CD8-positive, alpha-beta T cell (primary cell): ENCODE measurements at regions of chrX and their contacts with region 1.

Region 1: GRCh38 chrX:101407748-101408531 is at the starts of genes GLA and HNRNPH2:
- DNase-seq: peak; percentile 74 to 98 (median 85)
- ATAC-seq: peak; percentile 88
- H3K4me3 ChIP-seq: peak within 1 kb of the TSS; percentile 88 to 91
- H3K4me3 Mint-ChIP-seq: peak within 1 kb of the TSS; percentile 93
- H3K27ac ChIP-seq: peak within 1 kb of the TSS; percentile 98 to 99
- H3K27ac Mint-ChIP-seq: peak within 1 kb of the TSS; percentile 99
- H3K4me1 ChIP-seq: peaks cover 24% of the 10 kb centered on the region
- H3K4me1 Mint-ChIP-seq: peaks cover 37% of the 10 kb centered on the region
- H3K27me3 ChIP-seq: no peaks in the 10 kb centered on the region
- H3K27me3 Mint-ChIP-seq: no peaks in the 10 kb centered on the region
- CTCF ChIP-seq: no peak
- total RNA-seq, gene GLA: 31.7 to 32.0 TPM
- total RNA-seq, gene HNRNPH2: 43.2 to 47.3 TPM

Region 2: DNA sequence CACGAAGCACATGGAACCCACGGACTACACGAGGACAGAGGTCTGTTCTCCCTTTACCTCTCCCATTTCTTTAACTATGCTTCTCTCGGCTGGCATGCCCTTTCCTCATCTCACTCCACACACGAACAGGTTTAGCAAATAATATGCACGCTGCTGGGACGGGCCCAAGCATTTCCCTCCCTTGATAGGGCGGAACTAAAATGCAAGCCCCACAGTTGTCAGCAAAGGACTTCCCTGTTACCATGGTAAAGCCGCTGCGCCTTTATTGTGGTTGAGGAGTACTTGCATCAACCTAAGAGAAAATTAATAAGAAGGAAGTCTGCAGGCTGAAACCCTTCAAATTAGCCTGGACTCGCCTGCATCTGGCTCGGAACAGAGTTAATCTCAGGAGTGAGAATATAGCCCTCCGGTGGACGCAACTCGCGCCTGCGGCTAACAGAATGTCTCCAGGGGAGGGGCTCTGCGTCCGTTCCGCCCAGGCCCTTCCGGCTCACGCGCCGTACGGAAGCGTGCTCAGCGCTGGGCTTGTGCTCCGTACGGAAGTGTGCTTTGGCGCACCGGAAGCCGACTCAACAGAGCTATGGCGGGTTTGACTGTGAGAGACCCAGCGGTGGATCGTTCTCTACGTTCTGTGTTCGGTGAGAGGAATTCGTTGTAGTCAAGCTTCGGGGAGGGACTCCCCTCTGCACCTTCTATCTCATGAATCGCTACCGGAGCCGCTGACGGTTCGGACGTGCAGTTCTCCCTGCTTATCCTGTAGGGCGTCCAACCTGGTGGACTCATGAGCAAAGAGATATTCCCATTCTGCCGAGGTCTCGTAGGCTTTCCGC is 587.9 kb before region 1 on chrX and contains the start of gene CSTF2:
- CTCF ChIA-PET with region 1: no interaction called
- POLR2A ChIA-PET with region 1: no interaction called
- intact Hi-C with region 1: loop called in 1 of 2 experiments (anchors 5 kb)
- DNase-seq: peak; percentile 53 to 90 (median 78)
- ATAC-seq: peak; percentile 95
- H3K4me3 ChIP-seq: peak within 1 kb of the TSS; percentile 65 to 83
- H3K4me3 Mint-ChIP-seq: peak within 1 kb of the TSS; percentile 90
- H3K27ac ChIP-seq: peak within 1 kb of the TSS; percentile 87 to 92
- H3K27ac Mint-ChIP-seq: peak within 1 kb of the TSS; percentile 90
- H3K4me1 ChIP-seq: no peaks in the 10 kb centered on the region
- H3K4me1 Mint-ChIP-seq: peaks cover 18% of the 10 kb centered on the region
- H3K27me3 ChIP-seq: no peaks in the 10 kb centered on the region
- H3K27me3 Mint-ChIP-seq: peaks cover 4% of the 10 kb centered on the region
- CTCF ChIP-seq: no peak
- total RNA-seq, gene CSTF2: 10.1 to 10.6 TPM

Region 3: DNA sequence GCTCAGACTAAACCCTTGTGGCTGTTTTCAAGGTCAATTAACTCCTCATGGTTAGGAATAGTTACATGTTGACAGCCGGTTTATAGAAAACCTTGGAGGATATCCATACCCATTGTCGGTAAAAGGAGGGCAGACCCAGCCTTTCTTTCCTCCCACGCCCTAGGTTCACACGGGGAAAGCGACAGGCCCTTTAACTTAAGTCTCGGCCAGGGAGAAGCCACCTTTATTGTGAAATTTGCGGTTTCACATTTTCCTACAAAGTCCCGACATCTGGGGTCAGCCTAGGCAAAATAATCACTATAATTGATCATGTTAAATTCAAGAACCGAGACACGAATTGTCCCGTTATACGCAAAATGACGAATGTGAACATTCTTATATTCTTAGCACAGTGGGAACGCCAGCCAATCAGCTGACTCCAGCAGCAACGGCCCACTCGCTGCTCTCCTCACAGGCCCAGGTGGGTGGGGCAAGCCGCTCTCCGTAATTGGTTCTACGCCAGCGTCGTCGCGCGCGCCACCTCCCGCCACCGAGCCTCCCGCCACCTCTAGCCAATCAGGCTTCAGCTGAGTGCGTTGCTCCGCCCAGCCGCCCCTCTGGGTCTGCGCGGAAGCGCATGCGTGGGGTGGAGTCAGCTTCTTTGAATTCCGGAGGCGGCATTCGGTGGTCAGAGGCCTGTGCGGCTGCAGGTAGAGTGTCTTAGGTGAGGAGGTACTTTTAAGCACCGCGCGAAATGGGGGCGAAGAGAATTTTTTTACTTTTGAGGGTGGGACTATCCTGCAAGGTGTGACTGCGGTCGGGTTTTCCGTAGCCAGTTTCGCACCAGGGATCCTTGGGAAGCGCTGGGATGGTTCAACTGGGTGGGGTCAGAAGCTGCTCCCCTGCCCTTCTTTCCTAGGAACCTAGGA is 310.1 kb before region 1 on chrX and contains the start of gene CENPI:
- CTCF ChIA-PET with region 1: no interaction called
- POLR2A ChIA-PET with region 1: no interaction called
- intact Hi-C with region 1: loop called (anchors 2 to 10 kb)
- DNase-seq: peak; percentile 83 to 95 (median 90)
- ATAC-seq: peak; percentile 99
- H3K4me3 ChIP-seq: peak within 1 kb of the TSS; percentile 50 to 69
- H3K4me3 Mint-ChIP-seq: peak within 1 kb of the TSS; percentile 91
- H3K27ac ChIP-seq: peak within 1 kb of the TSS; percentile 80 to 88
- H3K27ac Mint-ChIP-seq: peak within 1 kb of the TSS; percentile 96
- H3K4me1 ChIP-seq: peaks cover 10% of the 10 kb centered on the region
- H3K4me1 Mint-ChIP-seq: peaks cover 13% of the 10 kb centered on the region
- H3K27me3 ChIP-seq: no peaks in the 10 kb centered on the region
- H3K27me3 Mint-ChIP-seq: no peaks in the 10 kb centered on the region
- CTCF ChIP-seq: no peak
- total RNA-seq, gene CENPI: 0.35 to 0.44 TPM

Region 4: DNA sequence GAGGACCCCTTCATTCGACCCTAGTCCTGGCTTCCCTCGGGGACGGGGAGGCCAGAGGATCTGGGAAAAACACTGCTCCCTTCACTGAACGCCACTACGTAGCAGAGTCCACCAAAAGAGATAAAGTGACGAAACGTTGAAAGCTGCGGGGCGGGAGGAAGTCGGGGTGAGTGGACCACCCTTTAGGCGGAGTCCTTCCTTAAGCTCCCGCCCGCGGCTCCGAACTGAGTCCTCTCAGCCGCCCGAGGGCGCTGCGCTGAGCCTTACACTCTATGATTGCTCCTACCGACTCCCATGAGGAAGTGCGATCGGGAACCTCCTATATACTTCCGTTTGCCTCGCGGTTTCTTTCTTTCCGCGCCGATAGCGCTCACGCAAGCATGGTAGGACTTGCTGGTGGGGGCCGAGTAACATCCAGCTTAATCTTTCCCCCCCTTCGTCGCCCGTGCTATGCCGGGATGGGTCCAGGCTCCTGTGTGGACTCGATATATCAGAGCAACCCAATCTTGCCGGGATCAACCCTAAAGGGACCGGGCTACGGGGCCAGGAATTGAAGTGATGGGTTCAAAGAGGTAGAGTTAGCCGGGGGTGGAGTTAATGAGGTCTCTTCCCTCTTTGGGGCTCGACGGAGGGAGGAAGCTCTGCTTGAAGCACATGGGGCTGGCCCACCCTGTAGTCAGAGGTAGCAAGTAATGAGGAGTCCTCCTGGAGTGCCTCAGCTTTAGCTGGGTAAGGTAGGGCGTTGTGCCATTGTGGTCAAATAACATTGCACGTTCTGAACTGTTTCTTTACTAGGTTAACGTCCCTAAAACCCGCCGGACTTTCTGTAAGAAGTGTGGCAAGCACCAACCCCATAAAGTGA is 17.0 kb before region 1 on chrX and contains the start of gene RPL36A:
- CTCF ChIA-PET with region 1: interaction called, 3 read pairs
- POLR2A ChIA-PET with region 1: interaction called, 6 read pairs
- intact Hi-C with region 1: loop called (anchors 1 kb)
- DNase-seq: peak; percentile 50 to 91 (median 78)
- ATAC-seq: peak; percentile 92
- H3K4me3 ChIP-seq: peak within 1 kb of the TSS; percentile 49 to 69
- H3K4me3 Mint-ChIP-seq: peak within 1 kb of the TSS; percentile 91
- H3K27ac ChIP-seq: peak within 1 kb of the TSS; percentile 53 to 87
- H3K27ac Mint-ChIP-seq: peak within 1 kb of the TSS; percentile 95
- H3K4me1 ChIP-seq: peaks cover 15% of the 10 kb centered on the region
- H3K4me1 Mint-ChIP-seq: peaks cover 30% of the 10 kb centered on the region
- H3K27me3 ChIP-seq: no peaks in the 10 kb centered on the region
- H3K27me3 Mint-ChIP-seq: no peaks in the 10 kb centered on the region
- CTCF ChIP-seq: peak; percentile 54
- total RNA-seq, gene RPL36A: 308 to 378 TPM

Region 5: DNA sequence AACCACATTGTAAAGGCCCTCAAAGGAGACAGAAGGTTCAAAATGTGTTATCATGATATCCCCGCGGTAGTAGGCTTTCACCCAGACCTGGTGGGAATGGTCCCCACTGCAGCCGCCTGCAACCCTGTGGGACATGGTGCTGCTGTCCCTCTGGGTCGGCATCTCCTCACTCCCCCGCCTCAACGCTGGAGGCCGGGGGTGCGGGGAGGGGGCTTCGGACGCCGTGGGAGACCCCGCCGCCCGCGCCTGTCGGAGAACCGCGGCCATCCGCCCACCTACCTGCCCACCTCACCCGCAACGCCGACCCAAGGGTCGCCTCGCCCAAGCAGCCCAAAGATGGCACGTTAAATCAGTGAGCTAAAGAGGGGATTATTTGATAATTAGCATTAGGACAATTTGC is 131.2 kb after region 1 on chrX:
- CTCF ChIA-PET with region 1: no interaction called
- POLR2A ChIA-PET with region 1: no interaction called
- intact Hi-C with region 1: no loop called
- DNase-seq: no peak
- ATAC-seq: no peak
- H3K4me3 ChIP-seq: no peak overlapping the region
- H3K4me3 Mint-ChIP-seq: no peak overlapping the region
- H3K27ac ChIP-seq: no peak overlapping the region
- H3K27ac Mint-ChIP-seq: no peak overlapping the region
- H3K4me1 ChIP-seq: no peaks in the 10 kb centered on the region
- H3K4me1 Mint-ChIP-seq: no peaks in the 10 kb centered on the region
- H3K27me3 ChIP-seq: no peaks in the 10 kb centered on the region
- H3K27me3 Mint-ChIP-seq: no peaks in the 10 kb centered on the region
- CTCF ChIP-seq: no peak

Region 6: GRCh38 chrX:102652031-102652688 is 1244.2 kb after region 1 on chrX:
- CTCF ChIA-PET with region 1: no interaction called
- POLR2A ChIA-PET with region 1: no interaction called
- intact Hi-C with region 1: loop called in 1 of 2 experiments (anchors 5 kb)
- DNase-seq: peak; percentile 26 to 83 (median 62)
- ATAC-seq: peak; percentile 78
- H3K4me3 ChIP-seq: peak overlapping the region; percentile 73 to 78
- H3K4me3 Mint-ChIP-seq: peak overlapping the region; percentile 99
- H3K27ac ChIP-seq: peak overlapping the region; percentile 70 to 78
- H3K27ac Mint-ChIP-seq: peak overlapping the region; percentile 95
- H3K4me1 ChIP-seq: peaks cover 13% of the 10 kb centered on the region
- H3K4me1 Mint-ChIP-seq: peaks cover 42% of the 10 kb centered on the region
- H3K27me3 ChIP-seq: no peaks in the 10 kb centered on the region
- H3K27me3 Mint-ChIP-seq: no peaks in the 10 kb centered on the region
- CTCF ChIP-seq: peak; percentile 49